ENCODE measurements at regions of chr7 and their contacts with region 1.

Region 1: GRCh38 chr7:73738612-73739374 is at the start of gene ABHD11:
- DNase-seq: peak; percentile 92
- H3K4me3 ChIP-seq: peak within 1 kb of the TSS; percentile 89
- H3K27ac ChIP-seq: peak within 1 kb of the TSS; percentile 31
- H3K27me3 ChIP-seq: no peaks in the 10 kb centered on the region
- CTCF ChIP-seq: no peak
- polyA plus RNA-seq, gene ABHD11: 5.1 and 7.5 TPM in 2 replicates

Region 2: GRCh38 chr7:73726083-73726466 is 12.7 kb before region 1 on chr7:
- CTCF ChIA-PET with region 1: interaction called, 16 read pairs
- POLR2A ChIA-PET with region 1: interaction called, 5 read pairs
- DNase-seq: no peak
- H3K4me3 ChIP-seq: no peak overlapping the region
- H3K27ac ChIP-seq: no peak overlapping the region
- H3K27me3 ChIP-seq: peaks cover 8% of the 10 kb centered on the region
- CTCF ChIP-seq: no peak

Region 3: DNA sequence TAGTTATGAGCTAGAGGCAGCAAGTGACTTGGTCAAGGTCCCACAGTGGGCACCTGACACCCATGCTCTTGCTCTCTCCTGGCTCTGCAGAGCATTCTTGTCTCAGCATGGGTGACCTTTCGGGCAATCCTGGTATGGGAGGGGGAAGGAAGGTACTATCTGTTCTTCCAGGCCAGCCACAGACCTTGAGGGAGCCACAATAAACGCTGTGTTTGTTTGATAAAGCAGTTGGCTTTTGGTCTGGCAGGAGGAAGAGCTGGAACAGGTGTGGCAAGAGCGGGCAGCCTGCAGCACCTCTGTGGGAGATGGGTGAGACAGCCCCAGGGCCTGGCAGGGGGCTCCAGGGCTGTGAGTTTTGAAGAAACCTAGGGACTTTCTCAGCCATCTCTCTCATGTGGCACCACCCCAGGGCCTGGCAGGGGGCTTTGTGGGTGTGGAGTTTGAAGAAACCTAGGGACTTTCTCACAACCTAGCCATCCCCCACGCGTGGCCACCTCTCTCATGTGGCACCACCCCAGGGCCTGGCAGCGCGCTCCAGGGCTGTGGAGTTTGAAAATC is 19.9 kb after region 1 on chr7:
- CTCF ChIA-PET with region 1: no interaction called
- POLR2A ChIA-PET with region 1: interaction called, 12 read pairs
- DNase-seq: no peak
- H3K4me3 ChIP-seq: no peak overlapping the region
- H3K27ac ChIP-seq: no peak overlapping the region
- H3K27me3 ChIP-seq: peaks cover 5% of the 10 kb centered on the region
- CTCF ChIP-seq: no peak

Region 4: GRCh38 chr7:73865738-73866445 is 127.1 kb after region 1 on chr7:
- CTCF ChIA-PET with region 1: no interaction called
- POLR2A ChIA-PET with region 1: interaction called, 10 read pairs
- DNase-seq: no peak
- H3K4me3 ChIP-seq: no peak overlapping the region
- H3K27ac ChIP-seq: no peak overlapping the region
- H3K27me3 ChIP-seq: no peaks in the 10 kb centered on the region
- CTCF ChIP-seq: peak; percentile 84